ENCODE measurements at regions of chr3 and their contacts with region 1.

Region 1: DNA sequence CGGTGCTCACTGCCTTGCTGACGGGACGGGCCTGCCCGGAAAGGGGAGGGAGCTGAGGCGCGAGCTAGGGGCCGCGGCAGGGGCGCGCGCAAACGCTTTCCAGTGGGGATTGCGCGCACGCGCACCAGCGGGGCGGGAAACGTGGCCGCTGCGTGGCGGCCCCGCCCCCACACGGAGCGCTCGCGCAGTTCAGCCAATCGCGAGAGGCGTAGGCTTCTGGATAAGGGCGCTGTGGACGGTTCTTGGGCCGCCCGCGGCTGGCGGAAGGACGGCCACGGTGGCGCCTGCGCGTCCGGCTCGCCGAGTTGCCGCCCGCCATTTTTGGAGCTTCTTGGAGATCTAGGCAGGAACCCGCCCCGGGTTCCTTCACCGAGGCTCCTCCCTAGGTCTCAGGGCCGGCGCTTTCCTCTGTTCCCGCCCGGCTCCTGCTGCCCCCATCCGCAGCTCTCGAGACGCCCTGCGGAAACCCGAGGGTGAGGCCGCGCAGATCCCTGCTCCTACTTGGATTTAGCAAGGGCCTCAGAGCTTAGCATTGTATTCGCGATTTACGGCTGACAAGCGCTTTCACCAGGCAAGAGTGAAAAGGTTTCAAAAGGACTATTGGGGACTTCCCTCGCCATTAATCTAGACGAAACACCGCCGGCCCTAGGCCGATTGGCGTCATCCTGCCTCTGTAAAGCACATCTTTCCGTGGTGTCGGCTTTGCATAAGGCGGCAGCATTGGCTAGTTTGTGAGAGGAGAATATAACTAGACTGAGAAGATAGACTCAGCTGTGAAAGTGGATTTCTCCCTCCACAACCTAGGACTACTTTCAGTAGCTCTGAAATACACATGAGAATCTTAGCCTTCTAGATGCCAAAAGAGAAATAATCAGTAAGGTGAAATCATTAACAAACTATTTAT is 496 bp upstream of the STAG1 start:
- DNase-seq: peak; percentile 93
- CTCF ChIP-seq: peak; percentile 41

Region 2: DNA sequence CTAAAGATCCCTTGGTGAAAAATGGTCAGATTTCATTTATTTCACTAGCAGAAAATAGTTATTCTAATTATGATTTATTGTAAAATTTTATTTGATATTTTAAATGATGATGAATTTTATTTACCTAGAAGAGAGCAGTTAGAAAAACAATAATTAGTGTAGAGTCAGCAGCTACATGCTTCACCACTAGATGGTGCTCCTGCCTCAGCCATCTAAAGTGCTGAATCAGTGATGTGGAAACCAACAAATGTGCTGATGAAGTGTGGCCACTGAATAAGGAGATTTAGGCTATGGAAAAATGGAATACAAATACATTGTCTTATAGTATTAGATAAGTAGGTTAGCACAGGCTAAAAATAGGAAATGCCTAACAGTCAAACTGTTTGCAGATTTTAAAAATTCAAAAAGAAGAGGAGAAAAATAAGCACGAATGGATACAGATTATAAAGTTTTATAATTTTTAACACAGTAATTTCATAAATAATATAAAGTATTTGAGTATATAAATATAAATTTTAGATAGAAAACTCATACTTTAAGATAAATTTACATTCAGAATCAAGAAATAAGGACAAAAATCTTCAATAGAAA is 677.4 kb before region 1 on chr3:
- CTCF ChIA-PET with region 1: interaction called, 45 read pairs
- POLR2A ChIA-PET with region 1: no interaction called
- DNase-seq: peak; percentile 49
- CTCF ChIP-seq: peak; percentile 93

Region 3: GRCh38 chr3:136390574-136390973 is 362.1 kb before region 1 on chr3:
- CTCF ChIA-PET with region 1: interaction called, 47 read pairs
- POLR2A ChIA-PET with region 1: interaction called, 3 read pairs
- DNase-seq: no peak
- CTCF ChIP-seq: no peak

Region 4: GRCh38 chr3:136586580-136586979 is 166.1 kb before region 1 on chr3:
- CTCF ChIA-PET with region 1: interaction called, 12 read pairs
- POLR2A ChIA-PET with region 1: no interaction called
- DNase-seq: no peak
- CTCF ChIP-seq: no peak

Region 5: GRCh38 chr3:136741063-136741462 is 11.6 kb before region 1 on chr3:
- CTCF ChIA-PET with region 1: interaction called, 48 read pairs
- POLR2A ChIA-PET with region 1: interaction called, 6 read pairs
- DNase-seq: no peak
- CTCF ChIP-seq: no peak

Region 6: GRCh38 chr3:136949708-136950107 is 197.0 kb after region 1 on chr3:
- CTCF ChIA-PET with region 1: interaction called, 10 read pairs
- POLR2A ChIA-PET with region 1: no interaction called
- DNase-seq: no peak
- CTCF ChIP-seq: no peak